HepG2 (cell line): ENCODE measurements at regions of chr18 and their contacts with region 1.

Region 1: DNA sequence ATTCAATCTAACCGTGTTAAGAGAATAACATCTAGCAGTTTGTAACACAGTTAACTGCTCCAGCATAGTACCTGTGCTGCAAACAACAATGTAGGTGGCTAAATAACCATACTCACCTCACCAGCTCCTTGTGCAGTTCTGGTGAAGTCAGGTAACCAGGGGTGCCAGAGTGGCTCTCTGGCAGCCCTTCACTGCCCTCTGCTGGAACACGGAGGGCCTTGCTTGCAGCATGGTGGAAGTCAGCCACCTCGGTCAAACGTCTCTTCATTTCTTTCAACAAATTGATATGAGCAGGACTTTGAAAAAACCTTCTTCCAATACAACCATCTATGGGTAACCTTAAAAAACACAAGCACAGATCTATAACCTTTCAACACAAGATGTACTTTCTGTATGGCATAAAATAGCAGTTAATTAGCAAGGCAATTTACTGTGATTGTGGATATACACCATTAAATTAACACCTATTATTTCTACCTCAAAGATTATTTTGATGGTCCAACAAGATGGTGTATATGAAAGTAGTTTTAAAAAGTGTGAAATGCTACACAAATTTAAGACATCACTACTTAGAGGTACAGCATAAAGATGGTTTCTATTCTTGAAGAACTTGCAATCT is 56.6 kb downstream of the EPG5 start:
- DNase-seq: peak; percentile 44
- ATAC-seq: peak; percentile 94
- H3K4me3 ChIP-seq: no peak overlapping the region
- H3K27ac ChIP-seq: no peak overlapping the region
- H3K4me1 ChIP-seq: no peaks in the 10 kb centered on the region
- H3K27me3 ChIP-seq: no peaks in the 10 kb centered on the region
- CTCF ChIP-seq: peak; percentile 84
- EP300 ChIP-seq: no peak
- POLR2A ChIP-seq: no peak
- RAD21 ChIP-seq: peak; percentile 49; the same call in 1 of the 2 replicates

Region 2: DNA sequence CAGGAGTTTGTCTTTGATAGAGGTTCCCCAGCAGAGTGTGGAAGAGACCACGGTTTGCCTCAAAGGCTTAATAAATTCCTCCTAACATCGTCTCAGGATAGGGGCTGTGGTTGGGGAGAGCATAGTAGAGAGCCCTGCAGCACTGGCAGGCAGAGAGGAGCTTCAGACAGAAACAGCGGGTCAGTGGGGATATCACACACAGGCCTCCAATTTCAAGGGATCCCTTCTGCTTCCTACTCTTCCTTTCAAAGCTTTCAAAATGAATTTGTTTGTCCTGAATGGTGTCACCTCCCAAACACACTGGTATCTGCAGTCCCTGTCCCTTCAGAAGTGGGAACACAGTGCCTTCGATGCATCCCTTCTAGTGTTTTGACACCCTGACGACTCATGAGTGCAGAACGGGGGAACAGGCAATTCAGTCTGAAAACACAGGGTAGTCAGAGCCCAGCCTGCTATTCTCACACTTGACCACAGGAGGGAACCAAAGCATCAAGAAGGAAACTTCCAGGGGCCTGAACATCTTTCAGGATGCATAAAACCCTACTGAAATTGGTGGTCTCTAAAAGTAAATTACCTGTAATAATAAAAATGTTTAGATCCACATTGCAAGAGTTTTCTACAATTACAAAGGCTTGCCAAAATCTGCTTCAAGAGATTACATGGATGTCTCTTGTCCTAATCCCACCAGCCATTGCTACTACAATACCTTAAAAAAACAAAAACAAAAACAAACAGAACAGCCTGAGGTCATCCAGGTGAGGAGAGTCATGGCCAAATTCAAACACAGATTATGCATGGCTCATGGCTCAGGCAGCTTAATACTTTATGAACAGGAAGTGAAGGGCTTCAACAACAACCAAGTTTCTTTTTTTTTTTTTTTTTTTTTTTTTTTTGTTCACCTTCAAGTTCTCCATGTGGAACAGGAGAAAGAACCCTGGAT is 245.4 kb before region 1 on chr18:
- CTCF ChIA-PET with region 1: interaction called, 9 read pairs
- POLR2A ChIA-PET with region 1: no interaction called
- in situ Hi-C with region 1: no loop called
- intact Hi-C with region 1: loop called (anchors 1 kb)
- DNase-seq: peak; percentile 28
- ATAC-seq: peak; percentile 83
- H3K4me3 ChIP-seq: no peak overlapping the region
- H3K27ac ChIP-seq: no peak overlapping the region
- H3K4me1 ChIP-seq: peaks cover 7% of the 10 kb centered on the region
- H3K27me3 ChIP-seq: peaks cover 0 to 9% of the 10 kb centered on the region in 2 experiments; a peak in 2 of 5 replicates
- CTCF ChIP-seq: peak; percentile 75
- EP300 ChIP-seq: no peak
- POLR2A ChIP-seq: no peak
- RAD21 ChIP-seq: no peak